ENCODE measurements at regions of chr5 and their contacts with region 1.

Region 1: DNA sequence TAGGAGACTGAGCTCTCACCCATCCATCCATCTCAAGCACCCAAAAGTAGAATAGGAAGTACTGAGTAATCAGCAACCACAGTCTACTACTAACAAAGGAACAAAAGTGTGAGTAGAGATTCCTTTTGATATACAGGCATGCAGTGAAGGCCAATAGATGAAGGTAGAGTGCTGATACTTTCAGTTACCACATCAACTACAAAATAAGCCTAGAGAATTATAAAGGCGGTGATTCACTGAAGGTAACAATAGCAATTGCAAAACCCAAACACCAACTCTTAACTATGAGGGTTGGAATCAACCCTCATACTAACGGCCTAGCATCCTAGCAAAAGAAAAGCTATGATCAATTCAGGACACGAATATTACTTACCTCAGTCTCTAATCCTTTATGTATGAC is 992.6 kb downstream of the DNAH5 start:
- DNase-seq: peak; percentile 61
- ATAC-seq: peak; percentile 49
- H3K4me3 ChIP-seq: no peak overlapping the region
- H3K27ac ChIP-seq: peak overlapping the region; percentile 36
- H3K4me1 ChIP-seq: peaks cover 21% of the 10 kb centered on the region
- H3K27me3 ChIP-seq: no peaks in the 10 kb centered on the region
- CTCF ChIP-seq: no peak

Region 2: GRCh38 chr5:12845549-12846159 is 106.2 kb before region 1 on chr5:
- CTCF ChIA-PET with region 1: no interaction called
- POLR2A ChIA-PET with region 1: no interaction called
- intact Hi-C with region 1: no loop called
- DNase-seq: no peak
- ATAC-seq: no peak
- H3K4me3 ChIP-seq: no peak overlapping the region
- H3K27ac ChIP-seq: no peak overlapping the region
- H3K4me1 ChIP-seq: peaks cover 10% of the 10 kb centered on the region; the same call in 1 of the 2 replicates
- H3K27me3 ChIP-seq: no peaks in the 10 kb centered on the region
- CTCF ChIP-seq: no peak

Region 3: GRCh38 chr5:13003457-13003856 is 51.6 kb after region 1 on chr5:
- CTCF ChIA-PET with region 1: no interaction called
- POLR2A ChIA-PET with region 1: no interaction called
- intact Hi-C with region 1: no loop called
- DNase-seq: no peak
- ATAC-seq: no peak
- H3K4me3 ChIP-seq: no peak overlapping the region
- H3K27ac ChIP-seq: no peak overlapping the region
- H3K4me1 ChIP-seq: peaks cover 5% of the 10 kb centered on the region; the same call in 1 of the 2 replicates
- H3K27me3 ChIP-seq: no peaks in the 10 kb centered on the region
- CTCF ChIP-seq: no peak

Region 4: GRCh38 chr5:13034048-13034447 is 82.2 kb after region 1 on chr5:
- CTCF ChIA-PET with region 1: no interaction called
- POLR2A ChIA-PET with region 1: no interaction called
- intact Hi-C with region 1: loop called (anchors 5 kb)
- DNase-seq: peak; percentile 81
- ATAC-seq: peak; percentile 98
- H3K4me3 ChIP-seq: no peak overlapping the region
- H3K27ac ChIP-seq: 0 out of 2 replicates have a peak overlapping the region, but pooled peaks have one; percentile 5
- H3K4me1 ChIP-seq: peaks cover 5% of the 10 kb centered on the region
- H3K27me3 ChIP-seq: no peaks in the 10 kb centered on the region
- CTCF ChIP-seq: no peak

Region 5: DNA sequence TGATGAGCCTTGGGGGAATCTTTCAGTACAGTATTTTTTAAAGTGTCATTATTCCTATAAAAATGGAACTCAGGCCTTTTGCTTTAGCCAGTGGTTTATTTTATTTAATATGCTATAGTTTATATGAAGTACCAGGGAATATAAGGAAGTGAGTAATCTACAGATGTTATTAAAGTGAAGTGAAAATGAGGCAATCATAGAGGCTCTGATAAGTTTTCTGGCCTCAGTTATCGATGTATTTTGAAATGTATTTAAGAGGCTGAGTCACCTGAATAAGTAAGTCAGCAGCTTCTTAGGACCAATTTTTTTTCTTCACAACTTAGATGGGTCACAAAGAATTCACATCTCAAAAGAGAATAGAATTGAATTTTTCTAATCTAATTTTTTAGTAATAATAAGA is 163.6 kb after region 1 on chr5:
- CTCF ChIA-PET with region 1: no interaction called
- POLR2A ChIA-PET with region 1: no interaction called
- intact Hi-C with region 1: loop called (anchors 10 kb)
- DNase-seq: no peak
- ATAC-seq: peak; percentile 29
- H3K4me3 ChIP-seq: no peak overlapping the region
- H3K27ac ChIP-seq: no peak overlapping the region
- H3K4me1 ChIP-seq: no peaks in the 10 kb centered on the region
- H3K27me3 ChIP-seq: no peaks in the 10 kb centered on the region
- CTCF ChIP-seq: no peak

Region 6: GRCh38 chr5:13359326-13359725 is 407.5 kb after region 1 on chr5:
- CTCF ChIA-PET with region 1: no interaction called
- POLR2A ChIA-PET with region 1: no interaction called
- intact Hi-C with region 1: loop called (anchors 10 kb)
- DNase-seq: peak; percentile 89
- ATAC-seq: peak; percentile 96
- H3K4me3 ChIP-seq: peak overlapping the region; percentile 29
- H3K27ac ChIP-seq: peak overlapping the region; percentile 67
- H3K4me1 ChIP-seq: peaks cover 34% of the 10 kb centered on the region
- H3K27me3 ChIP-seq: no peaks in the 10 kb centered on the region
- CTCF ChIP-seq: no peak

Region 7: GRCh38 chr5:13660072-13660471 is 708.2 kb after region 1 on chr5:
- CTCF ChIA-PET with region 1: no interaction called
- POLR2A ChIA-PET with region 1: no interaction called
- intact Hi-C with region 1: loop called (anchors 10 kb)
- DNase-seq: peak; percentile 53
- ATAC-seq: no peak
- H3K4me3 ChIP-seq: no peak overlapping the region
- H3K27ac ChIP-seq: no peak overlapping the region
- H3K4me1 ChIP-seq: peaks cover 19% of the 10 kb centered on the region
- H3K27me3 ChIP-seq: no peaks in the 10 kb centered on the region
- CTCF ChIP-seq: peak; percentile 57

Measured in PC-3 (cell line).